ENCODE measurements at regions of chr6 and their contacts with region 1.

Region 1: GRCh38 chr6:134822920-134823709 is 126.8 kb downstream of the ALDH8A1 start:
- DNase-seq: peak; percentile 77
- H3K4me3 ChIP-seq: no peak overlapping the region; a peak in 1 of 4 replicates
- H3K27ac ChIP-seq: no peak overlapping the region
- H3K4me1 ChIP-seq: peaks cover 0 to 5% of the 10 kb centered on the region in 2 experiments; a peak in 3 of 4 replicates
- H3K27me3 ChIP-seq: no peaks in the 10 kb centered on the region
- CTCF ChIP-seq: peak; percentile 80
- EP300 ChIP-seq: no peak
- RAD21 ChIP-seq: peak; percentile 99

Region 2: GRCh38 chr6:134168580-134169208 is 654.4 kb before region 1 on chr6:
- CTCF ChIA-PET with region 1: interaction called, 48 read pairs
- POLR2A ChIA-PET with region 1: interaction called, 10 read pairs
- DNase-seq: no peak
- H3K4me3 ChIP-seq: no peak overlapping the region
- H3K27ac ChIP-seq: peak overlapping the region in 1 of 2 experiments; percentile 13; a peak in 1 of 4 replicates
- H3K4me1 ChIP-seq: peaks cover 16 to 43% of the 10 kb centered on the region in 2 experiments
- H3K27me3 ChIP-seq: no peaks in the 10 kb centered on the region
- CTCF ChIP-seq: no peak
- EP300 ChIP-seq: no peak
- RAD21 ChIP-seq: no peak

Region 3: DNA sequence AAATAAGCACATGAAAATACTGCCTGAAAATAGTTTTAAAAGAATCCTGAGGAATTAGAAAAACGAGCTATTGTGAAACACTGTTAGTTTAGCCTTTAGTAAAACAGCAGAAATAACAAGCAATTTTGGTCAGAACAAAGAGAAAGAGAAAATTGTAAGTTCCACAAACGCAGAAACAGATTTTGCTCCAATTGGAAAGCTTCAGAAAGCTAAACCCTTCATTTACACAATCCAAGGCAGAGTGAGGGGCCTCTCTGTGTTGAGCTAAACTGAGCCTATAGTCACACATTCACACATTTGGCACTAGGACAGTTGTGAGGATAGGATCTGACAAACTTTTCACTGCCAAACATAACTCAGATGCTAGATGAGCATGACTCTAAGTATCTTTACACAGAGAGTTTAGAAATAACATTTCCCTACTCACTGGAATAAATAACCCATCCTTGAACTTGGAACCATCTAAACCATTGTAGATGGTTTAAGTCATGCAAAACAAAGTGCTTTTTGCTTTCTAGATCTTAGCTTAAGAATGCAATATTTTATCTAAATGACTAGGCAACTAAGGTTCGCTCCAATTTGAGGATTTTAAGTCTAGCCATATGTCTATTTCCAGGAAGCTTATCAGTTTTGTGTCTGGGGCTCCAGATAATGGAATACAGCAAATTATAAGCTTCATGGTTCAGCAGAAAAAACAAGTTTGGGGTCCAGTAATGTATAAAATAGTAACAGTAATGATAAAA is 627.8 kb before region 1 on chr6:
- CTCF ChIA-PET with region 1: interaction called, 15 read pairs
- POLR2A ChIA-PET with region 1: no interaction called
- DNase-seq: no peak
- H3K4me3 ChIP-seq: no peak overlapping the region
- H3K27ac ChIP-seq: peak overlapping the region in 1 of 2 experiments; percentile 71; a peak in 1 of 4 replicates
- H3K4me1 ChIP-seq: no peaks in the 10 kb centered on the region; a peak in 1 of 4 replicates
- H3K27me3 ChIP-seq: no peaks in the 10 kb centered on the region
- CTCF ChIP-seq: no peak
- EP300 ChIP-seq: no peak
- RAD21 ChIP-seq: no peak

Region 4: DNA sequence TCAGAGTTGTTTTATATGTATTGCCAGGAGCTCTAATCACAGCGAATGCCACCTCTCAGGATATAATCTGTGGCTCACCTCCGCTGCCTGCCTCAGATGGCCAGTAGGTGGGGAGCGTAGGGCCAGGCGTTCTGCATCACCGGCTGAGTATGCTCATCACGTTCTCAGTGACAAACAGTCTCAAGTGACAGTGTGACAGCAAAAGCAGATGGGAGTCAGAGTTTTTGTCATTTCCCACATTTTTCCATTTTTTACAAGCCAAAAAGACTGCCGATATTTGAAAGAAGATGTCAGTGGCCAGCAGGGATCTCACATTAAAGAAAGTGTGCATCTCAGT is 81.9 kb before region 1 on chr6:
- CTCF ChIA-PET with region 1: interaction called, 14 read pairs
- POLR2A ChIA-PET with region 1: no interaction called
- DNase-seq: peak; percentile 43
- H3K4me3 ChIP-seq: no peak overlapping the region
- H3K27ac ChIP-seq: peak overlapping the region; percentile 69 to 92
- H3K4me1 ChIP-seq: peaks cover 6 to 16% of the 10 kb centered on the region in 2 experiments; a peak in 3 of 4 replicates
- H3K27me3 ChIP-seq: no peaks in the 10 kb centered on the region
- CTCF ChIP-seq: peak; percentile 34; the same call in 1 of the 2 replicates
- EP300 ChIP-seq: no peak
- RAD21 ChIP-seq: peak; percentile 53

Region 5: GRCh38 chr6:134938896-134939295 is 115.8 kb after region 1 on chr6:
- CTCF ChIA-PET with region 1: interaction called, 33 read pairs
- POLR2A ChIA-PET with region 1: no interaction called
- DNase-seq: no peak
- H3K4me3 ChIP-seq: no peak overlapping the region
- H3K27ac ChIP-seq: no peak overlapping the region
- H3K4me1 ChIP-seq: peaks cover 3 to 4% of the 10 kb centered on the region in 2 experiments; a peak in 2 of 4 replicates
- H3K27me3 ChIP-seq: no peaks in the 10 kb centered on the region
- CTCF ChIP-seq: no peak
- EP300 ChIP-seq: no peak
- RAD21 ChIP-seq: no peak

Region 6: GRCh38 chr6:135299256-135299655 is 476.1 kb after region 1 on chr6:
- CTCF ChIA-PET with region 1: no interaction called
- POLR2A ChIA-PET with region 1: no interaction called
- DNase-seq: no peak
- H3K4me3 ChIP-seq: no peak overlapping the region
- H3K27ac ChIP-seq: peak overlapping the region in 1 of 2 experiments; percentile 68; a peak in 2 of 4 replicates
- H3K4me1 ChIP-seq: peaks cover 0 to 13% of the 10 kb centered on the region in 2 experiments; a peak in 1 of 4 replicates
- H3K27me3 ChIP-seq: no peaks in the 10 kb centered on the region
- CTCF ChIP-seq: no peak
- EP300 ChIP-seq: peak in 1 of 2 experiments; percentile 30; a peak in 1 of 4 replicates
- RAD21 ChIP-seq: no peak

Measured in SK-N-SH (cell line).